ENCODE measurements at regions of chr18 and their contacts with region 1.

Region 1: DNA sequence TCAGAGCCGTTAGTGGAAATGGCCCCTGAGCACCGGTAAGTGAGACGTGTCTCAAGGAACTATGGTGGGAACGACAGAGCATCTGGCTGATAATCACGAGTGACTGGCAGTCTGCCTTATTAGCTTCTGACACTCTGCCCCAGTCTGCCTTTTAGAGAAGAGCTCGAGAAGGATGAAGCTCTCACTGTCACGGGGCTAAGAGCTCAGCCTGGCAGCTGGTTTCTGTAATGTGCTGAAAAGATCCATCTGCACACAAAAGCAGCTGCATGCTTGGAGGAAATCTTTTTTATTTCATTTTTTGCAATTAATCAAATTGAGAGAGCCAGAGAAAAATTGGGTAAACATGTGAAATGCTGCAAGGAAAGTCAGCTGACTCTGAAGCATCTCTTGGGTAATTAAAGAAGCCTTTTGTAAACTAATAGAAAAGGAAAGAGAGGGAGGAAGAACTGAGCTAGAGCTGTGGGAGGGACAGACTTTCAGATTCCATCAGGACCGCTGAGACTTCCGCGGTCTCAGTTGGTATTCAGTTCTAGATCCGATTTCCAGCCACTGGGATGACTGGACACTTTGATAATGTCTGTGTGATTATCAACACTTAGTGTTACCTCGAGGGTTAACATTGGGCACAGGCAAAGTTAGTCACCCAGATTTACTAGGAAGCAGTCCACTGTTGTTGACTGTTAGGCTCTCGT is 24.4 kb downstream of the MBP start:
- DNase-seq: peak in 8 of 35 experiments; percentile 19 to 62 (median 34)
- ATAC-seq: peak in 3 of 4 experiments; percentile 25 to 40 (median 39)
- H3K4me3 ChIP-seq: no peak overlapping the region
- H3K4me3 Mint-ChIP-seq: peak overlapping the region; percentile 26 to 84 (median 43)
- H3K27ac ChIP-seq: peak overlapping the region; percentile 88
- H3K27ac Mint-ChIP-seq: peak overlapping the region; percentile 95 to 96
- H3K4me1 ChIP-seq: peaks cover 40 to 91% of the 10 kb centered on the region in 2 experiments
- H3K4me1 Mint-ChIP-seq: peaks cover 95 to 98% (median 97%) of the 10 kb centered on the region in 3 donors
- H3K27me3 ChIP-seq: no peaks in the 10 kb centered on the region
- H3K27me3 Mint-ChIP-seq: no peaks in the 10 kb centered on the region

Region 2: GRCh38 chr18:77013811-77014521 is 94.2 kb before region 1 on chr18:
- CTCF ChIA-PET with region 1: no interaction called
- POLR2A ChIA-PET with region 1: no interaction called
- DNase-seq: no peak
- ATAC-seq: no peak
- H3K4me3 ChIP-seq: no peak overlapping the region
- H3K4me3 Mint-ChIP-seq: no peak overlapping the region
- H3K27ac ChIP-seq: no peak overlapping the region
- H3K27ac Mint-ChIP-seq: no peak overlapping the region
- H3K4me1 ChIP-seq: peaks cover 0 to 7% of the 10 kb centered on the region in 2 experiments
- H3K4me1 Mint-ChIP-seq: peaks cover 21 to 30% (median 24%) of the 10 kb centered on the region in 3 donors
- H3K27me3 ChIP-seq: no peaks in the 10 kb centered on the region
- H3K27me3 Mint-ChIP-seq: no peaks in the 10 kb centered on the region

Region 3: DNA sequence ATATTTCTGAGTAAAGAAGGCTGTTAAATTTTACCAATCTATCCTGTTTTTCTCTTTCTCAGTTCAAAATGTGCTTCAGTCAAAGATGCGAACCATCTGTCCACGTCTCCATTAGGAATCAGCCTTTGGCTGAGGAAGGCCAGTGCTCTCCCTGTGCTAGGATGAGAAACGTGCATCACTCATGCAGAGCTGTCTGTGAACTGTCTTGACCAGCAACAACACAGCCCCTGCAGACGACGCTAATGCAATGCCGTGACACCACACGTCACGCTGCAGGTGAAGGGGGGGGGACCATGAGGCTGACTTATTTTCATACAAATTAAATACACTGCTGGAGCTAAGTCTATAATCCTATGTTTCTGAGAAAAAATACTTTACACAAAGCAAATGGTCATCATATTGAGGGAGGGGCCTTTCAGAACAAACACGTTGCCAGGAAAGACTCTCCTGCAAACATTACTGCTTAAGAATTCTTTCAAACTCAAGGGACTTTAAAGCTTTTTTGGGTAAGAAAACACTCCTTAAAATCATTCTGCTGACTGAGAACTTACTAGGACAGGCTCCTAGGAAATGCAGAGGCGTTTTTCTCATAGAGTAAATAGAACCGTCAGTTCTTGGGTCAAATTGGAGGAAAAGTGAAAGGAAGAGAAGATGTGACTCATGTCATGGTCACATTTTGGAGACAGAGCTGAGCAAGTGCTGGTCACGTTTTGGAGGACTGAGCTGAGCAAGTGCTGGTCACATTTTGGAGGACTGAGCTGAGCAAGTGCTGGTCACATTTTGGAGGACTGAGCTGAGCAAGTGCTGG is 72.6 kb before region 1 on chr18:
- CTCF ChIA-PET with region 1: no interaction called
- POLR2A ChIA-PET with region 1: no interaction called
- DNase-seq: no peak
- ATAC-seq: no peak
- H3K4me3 ChIP-seq: no peak overlapping the region
- H3K4me3 Mint-ChIP-seq: no peak overlapping the region
- H3K27ac ChIP-seq: no peak overlapping the region
- H3K27ac Mint-ChIP-seq: no peak overlapping the region
- H3K4me1 ChIP-seq: peaks cover 0 to 64% of the 10 kb centered on the region in 2 experiments
- H3K4me1 Mint-ChIP-seq: peaks cover 56 to 85% (median 77%) of the 10 kb centered on the region in 3 donors
- H3K27me3 ChIP-seq: no peaks in the 10 kb centered on the region
- H3K27me3 Mint-ChIP-seq: no peaks in the 10 kb centered on the region

Region 4: DNA sequence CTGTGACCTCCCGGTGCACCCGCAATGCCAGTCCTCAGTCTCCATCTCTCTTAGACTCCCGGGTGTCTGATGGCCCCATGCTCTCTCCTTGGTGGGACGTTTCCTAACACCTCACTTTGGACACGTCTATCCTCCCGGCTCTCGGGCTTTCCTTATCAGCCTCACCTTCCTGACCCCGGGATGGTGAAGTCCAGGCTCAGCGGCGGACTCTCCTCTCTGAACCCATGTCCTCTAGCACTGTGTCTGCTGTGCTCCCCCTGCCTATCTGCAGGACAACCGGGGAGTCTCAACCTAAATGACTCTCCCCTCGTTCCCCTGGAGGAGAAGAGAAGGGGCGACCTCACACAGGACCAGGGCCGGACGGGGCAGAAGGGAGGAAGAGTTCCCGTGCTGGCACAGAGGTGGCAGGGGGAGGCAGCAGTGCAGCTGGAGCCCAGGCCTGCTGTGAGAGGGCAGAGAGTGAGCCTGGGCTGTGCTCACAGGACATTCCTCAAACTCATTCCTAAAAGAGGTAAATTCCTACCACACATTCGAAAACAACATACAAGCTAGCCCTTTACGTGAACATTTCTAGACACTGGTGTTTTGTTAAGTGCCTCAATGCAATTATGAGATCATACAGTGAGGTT is 17.5 kb before region 1 on chr18:
- CTCF ChIA-PET with region 1: no interaction called
- POLR2A ChIA-PET with region 1: no interaction called
- DNase-seq: no peak
- ATAC-seq: no peak
- H3K4me3 ChIP-seq: no peak overlapping the region
- H3K4me3 Mint-ChIP-seq: peak overlapping the region in 1 of 3 donors; percentile 0
- H3K27ac ChIP-seq: no peak overlapping the region
- H3K27ac Mint-ChIP-seq: peak overlapping the region; percentile 58 to 79
- H3K4me1 ChIP-seq: peaks cover 0 to 79% of the 10 kb centered on the region in 2 experiments
- H3K4me1 Mint-ChIP-seq: peaks cover 71 to 78% (median 78%) of the 10 kb centered on the region in 3 donors
- H3K27me3 ChIP-seq: no peaks in the 10 kb centered on the region
- H3K27me3 Mint-ChIP-seq: no peaks in the 10 kb centered on the region

Region 5: DNA sequence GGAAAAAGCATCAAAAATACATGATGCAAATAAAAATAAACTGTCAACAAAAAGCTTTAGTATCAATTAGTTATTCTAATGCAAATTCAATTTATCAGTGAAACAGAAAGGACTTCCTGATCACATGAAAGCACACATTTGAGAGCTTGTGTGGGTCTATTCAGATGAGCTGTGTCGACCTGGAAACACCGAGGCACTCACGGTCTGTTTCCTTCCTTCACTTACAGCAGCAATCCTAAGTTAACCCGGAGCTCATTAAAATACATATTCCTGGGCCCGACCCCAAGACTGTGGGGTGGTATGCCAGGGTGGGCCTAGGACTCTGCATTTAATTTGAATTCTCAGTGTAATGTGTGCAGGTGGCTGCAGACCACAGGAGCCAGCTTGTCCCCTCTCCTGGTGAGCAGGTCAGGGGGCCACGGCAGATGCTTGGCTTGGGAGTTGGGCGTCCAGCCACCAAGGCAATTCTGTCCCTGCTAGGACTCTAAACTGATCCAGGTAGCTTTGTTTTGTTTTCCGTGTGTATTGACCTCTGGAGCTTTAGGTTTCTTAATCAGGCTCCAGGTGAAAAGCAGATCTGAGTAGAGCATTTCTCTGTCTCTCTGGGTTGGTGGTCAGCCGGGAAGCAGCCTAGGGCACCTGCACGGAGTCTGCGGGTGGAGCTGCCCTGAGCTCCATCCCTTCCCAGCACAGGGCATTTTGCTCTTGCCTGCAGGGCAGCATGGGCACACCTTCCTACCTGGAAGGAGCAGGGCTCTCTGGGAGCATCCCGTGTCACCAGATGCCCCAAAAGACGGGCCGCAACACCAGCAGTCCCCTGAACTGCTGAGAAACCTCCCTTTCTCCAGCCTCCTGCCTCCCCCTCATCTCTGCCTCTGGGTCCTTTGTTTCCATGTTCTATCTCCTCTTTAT is 15.4 kb after region 1 on chr18:
- CTCF ChIA-PET with region 1: interaction called in 1 of 2 experiments, 7 read pairs
- POLR2A ChIA-PET with region 1: interaction called, 7 to 29 read pairs
- DNase-seq: peak in 2 of 35 experiments; percentile 24 to 43
- ATAC-seq: no peak
- H3K4me3 ChIP-seq: peak overlapping the region; percentile 7 to 8
- H3K4me3 Mint-ChIP-seq: peak overlapping the region; percentile 60 to 71 (median 70)
- H3K27ac ChIP-seq: peak overlapping the region; percentile 77
- H3K27ac Mint-ChIP-seq: peak overlapping the region; percentile 76 to 88
- H3K4me1 ChIP-seq: peaks cover 32 to 68% of the 10 kb centered on the region in 2 experiments
- H3K4me1 Mint-ChIP-seq: peaks cover 96 to 100% (median 99%) of the 10 kb centered on the region in 3 donors
- H3K27me3 ChIP-seq: no peaks in the 10 kb centered on the region
- H3K27me3 Mint-ChIP-seq: no peaks in the 10 kb centered on the region

Region 6: GRCh38 chr18:77131100-77131651 is 23.0 kb after region 1 on chr18:
- CTCF ChIA-PET with region 1: interaction called in 1 of 2 experiments, 7 read pairs
- POLR2A ChIA-PET with region 1: interaction called, 3 to 27 read pairs
- DNase-seq: peak in 16 of 35 experiments; percentile 10 to 58 (median 36)
- ATAC-seq: peak in 1 of 4 experiments; percentile 7
- H3K4me3 ChIP-seq: peak overlapping the region; percentile 76 to 77
- H3K4me3 Mint-ChIP-seq: peak overlapping the region; percentile 96 to 97 (median 96)
- H3K27ac ChIP-seq: peak overlapping the region; percentile 65
- H3K27ac Mint-ChIP-seq: peak overlapping the region; percentile 93 to 96
- H3K4me1 ChIP-seq: peaks cover 28 to 44% of the 10 kb centered on the region in 2 experiments
- H3K4me1 Mint-ChIP-seq: peaks cover 63 to 69% (median 68%) of the 10 kb centered on the region in 3 donors
- H3K27me3 ChIP-seq: no peaks in the 10 kb centered on the region
- H3K27me3 Mint-ChIP-seq: no peaks in the 10 kb centered on the region

Measured in T-cell (primary cell).